ENCODE measurements at regions of chr1 and their contacts with region 1.

Region 1: GRCh38 chr1:31663622-31664452 is 19.2 kb upstream of the PEF1 start:
- DNase-seq: no peak
- H3K4me3 ChIP-seq: no peak overlapping the region
- H3K27me3 ChIP-seq: no peaks in the 10 kb centered on the region
- CTCF ChIP-seq: peak; percentile 85

Region 2: DNA sequence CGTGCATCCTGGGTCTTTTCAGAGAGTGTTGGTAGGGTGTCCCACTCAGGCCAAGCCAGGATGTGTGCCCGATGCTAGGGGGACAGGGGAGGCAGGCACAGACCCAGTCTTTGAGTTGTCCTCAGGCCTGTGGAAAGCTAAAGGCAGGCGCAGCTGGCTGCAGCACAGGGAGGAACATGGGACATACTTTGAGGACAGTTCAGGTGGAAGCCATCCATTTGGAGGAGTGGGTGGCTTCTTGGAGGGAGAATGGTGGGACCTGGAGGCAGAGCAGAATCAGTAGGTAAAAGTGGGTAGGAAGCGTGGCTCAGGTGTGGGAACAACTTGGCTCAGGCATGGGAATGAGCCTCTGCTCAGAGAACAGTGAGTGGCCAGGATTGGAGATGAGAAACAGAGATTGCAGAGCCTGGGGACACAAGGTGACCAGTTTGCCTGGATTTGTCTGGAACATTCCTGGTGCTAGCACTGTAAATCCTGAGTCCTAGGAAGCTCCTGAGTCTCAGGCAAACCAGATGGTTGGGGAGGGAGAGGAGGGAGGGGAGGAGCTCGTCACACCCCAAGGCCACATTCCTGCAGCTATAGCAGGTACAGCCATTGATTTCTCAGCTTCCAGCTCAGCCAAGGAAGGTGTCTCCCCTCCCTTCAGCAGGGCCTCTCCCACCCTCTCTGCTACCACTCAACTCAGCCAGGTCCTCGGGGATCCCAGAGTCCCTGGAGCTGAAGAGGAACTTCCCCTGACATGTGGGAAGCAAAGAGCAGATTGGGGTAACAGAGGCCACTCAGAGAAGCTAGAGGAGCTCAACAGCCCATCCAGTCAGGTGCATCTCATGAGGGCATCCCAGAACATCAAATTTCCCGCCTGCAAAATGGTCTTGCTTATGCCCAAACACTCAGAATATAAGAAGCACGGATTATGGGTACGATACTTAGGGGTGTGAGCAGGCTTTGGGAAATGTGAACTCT is 152.7 kb before region 1 on chr1:
- CTCF ChIA-PET with region 1: no interaction called
- POLR2A ChIA-PET with region 1: no interaction called
- DNase-seq: no peak
- H3K4me3 ChIP-seq: no peak overlapping the region
- H3K27me3 ChIP-seq: peaks cover 34% of the 10 kb centered on the region
- CTCF ChIP-seq: no peak

Region 3: DNA sequence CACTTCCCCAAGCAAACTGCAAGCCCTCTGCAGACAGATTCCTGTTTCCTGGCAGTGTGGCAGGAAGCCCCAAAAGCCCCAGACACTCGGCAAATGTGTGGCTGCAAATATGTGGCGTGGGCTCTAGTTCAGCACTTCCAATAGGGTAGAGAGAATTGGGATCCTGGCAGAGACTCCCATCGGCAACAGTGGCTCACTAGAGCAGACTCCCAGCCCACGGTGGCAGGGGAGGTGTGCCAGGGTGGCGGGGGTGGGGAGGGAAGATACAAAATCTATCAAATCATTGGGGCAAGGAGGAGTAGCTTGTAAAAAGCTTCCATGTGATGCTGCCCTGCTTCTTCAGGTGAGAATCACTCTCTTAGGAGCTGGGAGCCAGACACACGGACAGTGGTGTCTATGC is 14.1 kb after region 1 on chr1:
- CTCF ChIA-PET with region 1: interaction called, 13 read pairs
- POLR2A ChIA-PET with region 1: no interaction called
- DNase-seq: no peak
- H3K4me3 ChIP-seq: no peak overlapping the region
- H3K27me3 ChIP-seq: no peaks in the 10 kb centered on the region
- CTCF ChIP-seq: no peak

Region 4: DNA sequence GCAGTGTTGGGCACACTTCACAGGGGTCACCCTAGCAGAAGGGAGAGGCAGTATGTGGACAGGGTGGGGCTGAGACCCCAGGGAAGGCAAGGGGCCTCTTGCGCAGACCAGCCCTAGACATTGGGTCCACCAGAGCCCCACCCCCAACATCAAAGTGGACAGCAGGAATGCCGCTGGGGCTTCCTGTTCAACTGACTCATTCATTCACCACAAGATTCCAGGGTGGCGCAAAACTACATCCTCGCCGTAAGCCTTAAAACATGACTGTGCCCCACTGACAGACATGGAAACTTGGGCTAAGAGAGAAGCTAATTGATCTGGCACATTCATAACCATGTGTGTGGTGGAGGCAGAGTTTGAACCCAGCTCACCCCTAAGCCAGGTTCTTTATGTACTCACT is 26.0 kb after region 1 on chr1:
- CTCF ChIA-PET with region 1: interaction called, 21 read pairs
- POLR2A ChIA-PET with region 1: no interaction called
- DNase-seq: peak; percentile 78
- H3K4me3 ChIP-seq: no peak overlapping the region
- H3K27me3 ChIP-seq: no peaks in the 10 kb centered on the region
- CTCF ChIP-seq: no peak

Region 5: GRCh38 chr1:31705080-31705866 is 41.4 kb after region 1 on chr1:
- CTCF ChIA-PET with region 1: interaction called, 25 read pairs
- POLR2A ChIA-PET with region 1: no interaction called
- DNase-seq: no peak
- H3K4me3 ChIP-seq: no peak overlapping the region
- H3K27me3 ChIP-seq: no peaks in the 10 kb centered on the region
- CTCF ChIP-seq: peak; percentile 55

Region 6: GRCh38 chr1:31745096-31745945 is 81.5 kb after region 1 on chr1:
- CTCF ChIA-PET with region 1: interaction called, 44 read pairs
- POLR2A ChIA-PET with region 1: no interaction called
- DNase-seq: no peak
- H3K4me3 ChIP-seq: no peak overlapping the region
- H3K27me3 ChIP-seq: no peaks in the 10 kb centered on the region
- CTCF ChIP-seq: peak; percentile 90